Left colon (tissue), 2 donors: ENCODE measurements at regions of chr14 and their contacts with region 1.

Region 1: DNA sequence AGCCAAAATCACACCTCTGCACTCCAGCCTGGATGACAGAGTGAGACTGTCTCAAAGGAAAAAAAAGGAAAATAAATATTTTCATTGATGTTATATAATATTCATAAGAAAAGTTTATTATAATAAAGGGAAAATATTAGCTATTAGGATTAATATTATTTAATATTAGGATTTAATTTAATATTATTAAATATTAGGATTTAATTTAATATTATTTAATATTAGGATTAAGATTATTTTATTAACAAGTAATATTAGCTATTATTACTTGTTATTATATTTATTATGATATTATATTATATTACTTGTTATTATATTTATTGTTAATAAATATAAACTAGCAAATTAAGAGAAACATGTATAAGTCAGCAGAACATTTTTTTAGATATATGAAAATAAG is 518.1 kb downstream of the FSCB start:
- DNase-seq: no peak
- ATAC-seq: no peak

Region 2: DNA sequence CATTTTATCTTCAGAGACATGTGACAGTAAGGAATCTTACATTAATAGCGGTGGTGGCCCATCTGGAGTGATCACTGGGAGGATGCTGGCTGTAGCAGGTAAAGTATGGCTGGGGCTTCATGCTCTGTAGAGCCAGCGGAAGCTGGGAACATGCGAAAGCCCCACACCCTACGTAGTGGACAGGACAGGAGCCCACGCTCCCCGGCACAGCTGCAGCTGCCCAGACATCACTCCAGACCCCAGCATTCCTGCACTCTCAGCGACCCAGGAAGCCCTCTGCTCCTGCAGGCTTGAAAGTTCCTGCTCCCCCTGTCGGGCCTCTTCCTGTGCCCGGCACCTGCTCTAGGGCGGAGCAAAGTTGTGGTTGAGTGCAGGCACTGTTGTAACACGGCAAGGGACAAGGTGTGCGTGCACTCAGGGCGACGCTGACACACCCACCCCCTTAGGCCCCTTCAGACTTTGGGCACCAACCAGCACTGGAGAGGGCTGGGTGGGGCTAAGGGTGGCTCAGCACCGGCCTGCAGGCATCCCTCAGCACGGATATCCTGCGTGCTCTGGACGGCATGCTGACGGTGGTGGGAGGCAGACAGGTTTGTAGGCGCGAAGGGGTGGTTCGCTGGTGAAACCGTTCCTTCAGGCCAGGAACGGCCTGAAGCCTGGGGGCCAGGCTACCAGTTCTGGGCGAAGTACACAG is 50.3 kb before region 1 on chr14:
- intact Hi-C with region 1: loop called in 1 of 2 experiments (anchors 2 kb)
- DNase-seq: no peak
- ATAC-seq: no peak